ENCODE measurements at regions of chr17 and their contacts with region 1.

Region 1: GRCh38 chr17:58112970-58113631 is 29.9 kb downstream of the DYNLL2 start:
- ATAC-seq: peak; percentile 74 to 90 (median 78)
- H3K4me3 ChIP-seq: no peak overlapping the region
- H3K27ac ChIP-seq: no peak overlapping the region
- H3K4me1 ChIP-seq: no peaks in the 10 kb centered on the region

Region 2: DNA sequence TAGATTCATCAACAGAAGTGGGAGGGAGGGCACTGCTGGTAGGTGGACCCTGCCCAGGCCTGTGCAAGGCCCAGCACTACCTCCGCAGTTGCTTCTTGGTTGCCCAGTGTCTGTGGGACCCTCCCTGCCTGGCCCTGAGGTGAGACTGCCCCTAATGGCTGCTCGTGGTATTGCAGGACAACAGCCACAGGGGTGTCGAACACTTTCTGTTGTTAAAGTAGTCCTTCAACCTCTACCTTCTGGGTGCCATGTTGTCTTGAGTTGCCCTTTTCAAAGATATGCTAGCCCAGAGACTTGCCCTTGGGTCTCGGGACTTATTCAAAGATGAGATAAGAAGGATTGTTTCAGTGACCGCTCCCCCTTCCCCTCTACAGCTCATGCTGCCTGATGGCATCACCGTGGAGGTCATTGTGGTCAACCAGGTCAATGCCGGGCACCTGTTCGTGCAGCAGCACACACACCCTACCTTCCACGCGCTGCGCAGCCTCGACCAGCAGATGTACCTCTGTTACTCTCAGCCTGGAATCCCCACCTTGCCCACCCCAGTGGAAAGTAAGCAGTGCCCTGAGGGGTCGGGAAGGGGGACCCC is 998.9 kb before region 1 on chr17:
- in situ Hi-C with region 1: loop called in 1 of 9 experiments (anchors 25 kb)
- ATAC-seq: peak in 5 of 8 experiments; percentile 21 to 75 (median 50)
- H3K4me3 ChIP-seq: no peak overlapping the region
- H3K27ac ChIP-seq: no peak overlapping the region
- H3K4me1 ChIP-seq: no peaks in the 10 kb centered on the region

Region 3: DNA sequence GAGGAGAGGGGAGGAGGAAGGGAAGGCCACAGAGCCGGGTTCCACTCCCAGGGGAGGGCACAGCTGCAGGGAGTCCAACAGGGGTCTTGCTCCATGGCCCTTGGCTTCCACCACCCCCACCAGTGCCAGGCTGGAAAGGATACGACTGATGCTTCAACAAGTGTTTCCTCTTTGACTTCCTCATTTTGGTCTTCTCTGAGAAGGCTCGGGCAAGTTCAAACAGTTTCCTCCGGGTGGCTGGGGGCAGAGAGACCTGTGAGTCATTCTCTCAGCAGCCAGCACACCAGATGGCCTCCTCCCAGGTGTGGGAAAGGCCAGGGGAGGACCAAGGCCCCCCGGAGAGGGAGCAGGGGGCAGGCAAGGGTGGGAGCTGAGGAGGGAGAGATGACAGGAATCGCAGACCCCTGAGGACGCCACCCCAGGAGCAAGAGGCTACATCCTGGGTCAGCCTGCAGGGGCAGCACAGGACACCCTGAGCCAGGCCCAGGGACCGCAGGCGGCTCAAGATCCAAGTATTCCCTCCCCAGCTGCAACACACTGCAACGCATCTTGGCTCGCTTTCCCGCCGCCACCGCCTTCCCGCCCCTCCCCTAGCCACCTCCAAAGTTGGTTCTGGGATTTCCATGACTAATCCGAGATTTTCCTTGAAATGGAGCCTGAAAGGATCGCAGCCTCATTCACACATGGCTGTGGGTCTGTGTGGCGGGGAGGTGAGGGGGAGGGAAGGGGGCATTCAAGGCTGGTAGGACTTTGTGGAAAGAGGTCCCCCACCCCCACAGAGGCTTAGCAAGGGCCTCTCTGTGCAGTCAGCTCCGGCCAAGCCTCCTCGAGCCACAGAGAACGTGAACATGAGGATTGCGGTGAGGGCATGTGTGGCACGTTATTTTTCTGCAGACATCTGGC is 244.8 kb before region 1 on chr17:
- in situ Hi-C with region 1: loop called in 6 of 9 experiments (anchors 10 to 25 kb)
- ATAC-seq: peak; percentile 78 to 94 (median 90)
- H3K4me3 ChIP-seq: no peak overlapping the region
- H3K27ac ChIP-seq: peak overlapping the region; percentile 22 to 24
- H3K4me1 ChIP-seq: peaks cover 17 to 24% of the 10 kb centered on the region in 2 donors

Region 4: GRCh38 chr17:58006924-58007780 is 105.9 kb before region 1 on chr17 and contains the start of gene SRSF1:
- in situ Hi-C with region 1: loop called in 2 of 9 experiments (anchors 25 kb)
- ATAC-seq: peak; percentile 78 to 91 (median 88)
- H3K4me3 ChIP-seq: peak within 1 kb of the TSS; percentile 58 to 97 (median 82)
- H3K27ac ChIP-seq: peak within 1 kb of the TSS; percentile 99 to 100
- H3K4me1 ChIP-seq: peaks cover 24 to 27% of the 10 kb centered on the region in 2 donors
- total RNA-seq, gene SRSF1: 118 to 433 (median 192) TPM

Measured in motor neuron (in vitro differentiated cells).